Naive thymus-derived CD4-positive, alpha-beta T cell (primary cell): ENCODE measurements at regions of chr14 and their contacts with region 1.

Region 1: DNA sequence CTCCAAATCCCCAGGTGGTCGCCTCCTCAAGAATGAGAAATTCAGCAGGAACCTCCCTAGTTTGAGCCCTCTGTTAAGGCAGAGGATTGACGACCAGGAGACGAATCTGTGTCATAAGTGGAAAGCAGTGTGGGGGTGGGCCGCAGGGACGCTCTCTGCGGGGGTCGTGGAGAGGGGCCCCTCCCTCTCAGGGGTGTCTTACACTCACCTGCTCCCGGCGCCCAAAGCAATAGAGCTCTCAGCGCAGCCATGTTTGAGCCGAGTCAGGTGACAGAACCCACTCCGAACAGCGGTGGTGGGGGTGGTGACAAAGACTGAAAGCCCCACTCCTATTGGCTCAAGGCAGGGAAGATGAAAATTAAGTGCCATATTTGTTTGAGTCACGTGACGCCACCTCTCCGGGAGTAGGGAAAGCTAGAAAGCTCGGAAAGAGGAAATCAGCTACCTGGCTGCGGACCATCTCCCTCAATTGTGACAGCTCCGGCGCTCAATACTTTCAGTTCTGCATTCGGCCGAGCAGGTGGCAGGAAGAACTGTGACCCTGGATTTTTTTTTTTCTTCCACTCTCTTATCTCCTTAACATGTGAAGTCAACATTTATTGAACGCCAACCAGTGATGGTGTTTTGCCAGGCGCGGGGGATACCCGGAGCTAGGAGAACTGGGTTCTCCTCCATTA is at the start of gene ZFYVE26:
- DNase-seq: peak; percentile 55 to 93 (median 87)
- ATAC-seq: peak; percentile 96
- H3K4me3 ChIP-seq: peak within 1 kb of the TSS; percentile 91
- H3K4me3 Mint-ChIP-seq: peak within 1 kb of the TSS; percentile 87 to 99 (median 98)
- H3K27ac ChIP-seq: peak within 1 kb of the TSS; percentile 76
- H3K27ac Mint-ChIP-seq: peak within 1 kb of the TSS; percentile 91 to 99 (median 98)
- H3K4me1 ChIP-seq: peaks cover 11 to 15% of the 10 kb centered on the region in 2 donors
- H3K4me1 Mint-ChIP-seq: peaks cover 24 to 73% (median 65%) of the 10 kb centered on the region in 7 donors
- H3K27me3 ChIP-seq: no peaks in the 10 kb centered on the region
- H3K27me3 Mint-ChIP-seq: no peaks in the 10 kb centered on the region
- total RNA-seq, gene ZFYVE26: 25.0 to 38.9 (median 31.1) TPM

Region 2: GRCh38 chr14:67240978-67241414 is 575.5 kb before region 1 on chr14:
- CTCF ChIA-PET with region 1: no interaction called
- POLR2A ChIA-PET with region 1: no interaction called
- intact Hi-C with region 1: loop called in 1 of 2 experiments (anchors 5 kb)
- DNase-seq: peak; percentile 87 to 93 (median 91)
- ATAC-seq: peak; percentile 97
- H3K4me3 ChIP-seq: peak overlapping the region; percentile 84
- H3K4me3 Mint-ChIP-seq: peak overlapping the region; percentile 81 to 95 (median 91)
- H3K27ac ChIP-seq: peak overlapping the region; percentile 74
- H3K27ac Mint-ChIP-seq: peak overlapping the region; percentile 8 to 92 (median 85)
- H3K4me1 ChIP-seq: peaks cover 6 to 10% of the 10 kb centered on the region in 2 donors
- H3K4me1 Mint-ChIP-seq: peaks cover 16 to 37% (median 28%) of the 10 kb centered on the region in 7 donors
- H3K27me3 ChIP-seq: no peaks in the 10 kb centered on the region
- H3K27me3 Mint-ChIP-seq: peaks cover 0 to 33% (median 0%) of the 10 kb centered on the region in 5 donors

Region 3: DNA sequence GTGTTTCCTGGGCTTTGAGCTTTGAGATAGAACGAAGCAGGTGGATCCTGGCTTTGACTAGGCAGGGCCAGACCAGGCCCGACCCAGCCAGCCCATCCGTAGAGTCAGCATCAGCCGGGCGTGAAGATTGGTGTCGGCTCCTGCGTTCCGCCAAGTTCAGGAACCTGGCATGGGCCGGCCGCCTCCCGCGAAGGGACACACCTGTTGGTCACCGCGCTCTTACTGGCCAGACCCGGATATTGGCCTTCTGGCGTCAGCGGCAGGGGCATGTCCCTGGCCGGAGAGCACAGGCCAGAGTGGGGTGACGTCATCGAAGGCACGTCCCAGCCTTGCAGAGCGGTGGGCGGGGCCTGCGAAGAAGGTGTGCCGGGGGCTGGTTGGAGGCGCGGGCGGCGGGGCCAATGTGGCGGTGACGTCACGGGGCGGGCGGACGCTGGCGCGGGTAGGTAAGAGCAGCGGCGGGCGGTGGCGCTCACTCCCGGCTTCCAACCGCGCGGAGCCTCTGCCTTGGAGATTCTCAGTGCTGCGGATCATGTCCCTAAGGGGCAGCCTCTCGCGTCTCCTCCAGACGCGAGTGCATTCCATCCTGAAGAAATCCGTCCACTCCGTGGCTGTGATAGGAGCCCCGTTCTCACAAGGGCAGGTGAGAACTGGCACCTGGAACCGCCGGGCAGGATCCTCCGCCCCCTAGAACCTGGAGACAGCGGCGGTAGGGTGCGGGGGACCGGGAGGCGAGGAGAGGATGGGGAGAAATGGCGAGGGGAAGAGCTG is 196.8 kb before region 1 on chr14 and contains the start of gene ARG2:
- CTCF ChIA-PET with region 1: no interaction called
- POLR2A ChIA-PET with region 1: interaction called, 3 read pairs
- intact Hi-C with region 1: loop called (anchors 1 kb)
- DNase-seq: peak; percentile 92 to 98 (median 95)
- ATAC-seq: peak; percentile 95
- H3K4me3 ChIP-seq: peak within 1 kb of the TSS; percentile 93
- H3K4me3 Mint-ChIP-seq: peak within 1 kb of the TSS; percentile 89 to 93 (median 90)
- H3K27ac ChIP-seq: peak within 1 kb of the TSS; percentile 82
- H3K27ac Mint-ChIP-seq: peak within 1 kb of the TSS; percentile 70 to 97 (median 94)
- H3K4me1 ChIP-seq: peaks cover 12 to 18% of the 10 kb centered on the region in 2 donors
- H3K4me1 Mint-ChIP-seq: peaks cover 21 to 42% (median 37%) of the 10 kb centered on the region in 7 donors
- H3K27me3 ChIP-seq: no peaks in the 10 kb centered on the region
- H3K27me3 Mint-ChIP-seq: peaks cover 0 to 23% (median 0%) of the 10 kb centered on the region in 5 donors
- total RNA-seq, gene ARG2: 0.46 to 5.1 (median 3.2) TPM

Region 4: DNA sequence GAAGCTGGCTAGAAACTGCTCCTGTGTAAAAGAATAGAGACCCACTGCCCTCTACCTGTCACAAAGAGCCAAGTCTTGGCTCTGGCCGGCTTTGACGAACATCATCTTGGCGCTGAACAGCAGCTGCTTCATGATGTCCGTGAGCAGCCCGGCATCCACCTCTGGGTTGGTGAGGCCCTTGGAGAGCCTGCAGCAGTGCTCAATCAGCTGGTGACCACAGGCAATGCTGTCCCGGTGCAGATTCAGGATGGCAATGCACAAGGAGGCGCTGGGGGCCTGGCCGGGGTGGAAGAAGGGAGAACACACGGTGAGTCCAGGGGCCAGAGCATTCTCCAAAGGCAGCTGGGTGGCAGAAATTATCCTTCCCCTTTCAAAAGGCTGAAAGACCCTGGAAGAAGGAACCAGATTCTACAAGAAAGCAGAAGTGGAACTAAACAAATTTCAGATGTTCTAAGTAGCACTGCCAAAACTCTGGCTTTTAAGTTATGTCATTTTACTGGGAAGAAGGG is 50.2 kb before region 1 on chr14:
- CTCF ChIA-PET with region 1: no interaction called
- POLR2A ChIA-PET with region 1: no interaction called
- intact Hi-C with region 1: no loop called
- DNase-seq: no peak
- ATAC-seq: peak; percentile 62
- H3K4me3 ChIP-seq: no peak overlapping the region
- H3K4me3 Mint-ChIP-seq: no peak overlapping the region
- H3K27ac ChIP-seq: no peak overlapping the region
- H3K27ac Mint-ChIP-seq: no peak overlapping the region
- H3K4me1 ChIP-seq: no peaks in the 10 kb centered on the region
- H3K4me1 Mint-ChIP-seq: no peaks in the 10 kb centered on the region
- H3K27me3 ChIP-seq: no peaks in the 10 kb centered on the region
- H3K27me3 Mint-ChIP-seq: no peaks in the 10 kb centered on the region

Region 5: DNA sequence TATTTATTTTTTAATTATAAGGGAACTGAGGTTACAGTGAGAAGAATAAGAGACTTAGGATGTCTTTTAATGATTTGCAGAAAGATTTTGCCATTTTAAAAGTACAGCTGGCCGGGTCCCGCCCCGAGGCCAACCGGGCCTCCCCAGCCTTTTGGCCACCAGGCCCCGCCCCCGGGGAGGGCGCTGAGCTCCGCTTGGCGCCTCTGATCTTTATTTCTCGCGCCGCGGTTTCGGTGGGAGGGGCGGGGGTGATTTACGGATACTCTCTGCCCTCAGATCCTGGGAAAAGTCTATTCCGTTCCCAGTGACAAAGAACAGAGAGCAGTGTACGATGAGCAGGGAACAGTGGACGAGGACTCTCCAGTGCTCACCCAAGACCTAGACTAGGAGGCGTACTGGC is 17.7 kb before region 1 on chr14:
- CTCF ChIA-PET with region 1: no interaction called
- POLR2A ChIA-PET with region 1: no interaction called
- intact Hi-C with region 1: no loop called
- DNase-seq: no peak
- ATAC-seq: no peak
- H3K4me3 ChIP-seq: no peak overlapping the region
- H3K4me3 Mint-ChIP-seq: no peak overlapping the region
- H3K27ac ChIP-seq: no peak overlapping the region
- H3K27ac Mint-ChIP-seq: no peak overlapping the region
- H3K4me1 ChIP-seq: no peaks in the 10 kb centered on the region
- H3K4me1 Mint-ChIP-seq: peaks cover 0 to 4% (median 0%) of the 10 kb centered on the region in 7 donors
- H3K27me3 ChIP-seq: no peaks in the 10 kb centered on the region
- H3K27me3 Mint-ChIP-seq: no peaks in the 10 kb centered on the region

Region 6: DNA sequence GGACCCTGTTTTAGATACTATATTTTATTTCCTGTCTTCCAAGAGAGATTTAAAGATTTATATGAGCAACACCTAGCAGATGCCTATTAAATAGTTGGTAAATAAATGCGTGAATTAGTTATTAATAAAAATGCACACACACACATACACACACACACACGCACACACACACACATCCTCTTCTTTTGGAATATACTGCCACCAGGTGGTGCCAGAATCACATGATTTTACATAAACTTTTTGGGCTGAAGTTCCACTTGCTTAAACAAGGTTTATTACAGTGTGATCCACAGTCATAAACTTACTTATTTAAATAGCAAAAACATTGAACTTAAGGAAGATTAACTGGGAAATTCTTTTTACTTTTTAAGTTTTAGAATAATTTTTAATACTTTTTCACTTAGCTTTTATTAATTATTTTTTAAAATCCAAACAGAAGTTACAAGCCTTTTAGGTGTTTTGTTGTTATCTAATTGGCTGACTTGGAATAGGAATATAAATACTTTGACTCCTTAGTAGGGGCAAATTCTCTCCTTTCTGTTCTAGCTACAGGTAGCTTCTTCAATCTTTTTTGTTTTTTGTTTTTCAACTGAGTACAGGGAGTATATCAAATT is 20.7 kb after region 1 on chr14:
- CTCF ChIA-PET with region 1: interaction called, 3 read pairs
- POLR2A ChIA-PET with region 1: interaction called, 6 read pairs
- intact Hi-C with region 1: loop called in 1 of 2 experiments (anchors 1 kb)
- DNase-seq: peak in 7 of 9 donors; percentile 50 to 73 (median 62)
- ATAC-seq: peak; percentile 92
- H3K4me3 ChIP-seq: no peak overlapping the region
- H3K4me3 Mint-ChIP-seq: no peak overlapping the region
- H3K27ac ChIP-seq: no peak overlapping the region
- H3K27ac Mint-ChIP-seq: peak overlapping the region in 2 of 9 donors; percentile 16 to 67
- H3K4me1 ChIP-seq: no peaks in the 10 kb centered on the region
- H3K4me1 Mint-ChIP-seq: peaks cover 0 to 4% (median 0%) of the 10 kb centered on the region in 7 donors
- H3K27me3 ChIP-seq: no peaks in the 10 kb centered on the region
- H3K27me3 Mint-ChIP-seq: no peaks in the 10 kb centered on the region

Region 7: GRCh38 chr14:68663385-68664076 is 847.1 kb after region 1 on chr14:
- CTCF ChIA-PET with region 1: no interaction called
- POLR2A ChIA-PET with region 1: no interaction called
- intact Hi-C with region 1: no loop called
- DNase-seq: peak in 1 of 9 donors; percentile 63
- ATAC-seq: peak; percentile 34
- H3K4me3 ChIP-seq: peak overlapping the region; percentile 25
- H3K4me3 Mint-ChIP-seq: peak overlapping the region in 9 of 10 donors; percentile 21 to 82 (median 30)
- H3K27ac ChIP-seq: no peak overlapping the region
- H3K27ac Mint-ChIP-seq: peak overlapping the region in 5 of 9 donors; percentile 8 to 79 (median 62)
- H3K4me1 ChIP-seq: peaks cover 0 to 24% of the 10 kb centered on the region in 2 donors
- H3K4me1 Mint-ChIP-seq: peaks cover 18 to 53% (median 27%) of the 10 kb centered on the region in 7 donors
- H3K27me3 ChIP-seq: no peaks in the 10 kb centered on the region
- H3K27me3 Mint-ChIP-seq: peaks cover 0 to 4% (median 0%) of the 10 kb centered on the region in 5 donors

Region 8: GRCh38 chr14:68970038-68970612 is 1153.7 kb after region 1 on chr14:
- CTCF ChIA-PET with region 1: no interaction called
- POLR2A ChIA-PET with region 1: no interaction called
- intact Hi-C with region 1: loop called in 1 of 2 experiments (anchors 5 kb)
- DNase-seq: peak in 7 of 9 donors; percentile 81 to 94 (median 91)
- ATAC-seq: peak; percentile 77
- H3K4me3 ChIP-seq: peak overlapping the region; percentile 46
- H3K4me3 Mint-ChIP-seq: peak overlapping the region; percentile 43 to 96 (median 90)
- H3K27ac ChIP-seq: peak overlapping the region; percentile 89
- H3K27ac Mint-ChIP-seq: peak overlapping the region; percentile 85 to 100 (median 99)
- H3K4me1 ChIP-seq: peaks cover 27 to 79% of the 10 kb centered on the region in 2 donors
- H3K4me1 Mint-ChIP-seq: peaks cover 57 to 100% (median 90%) of the 10 kb centered on the region in 7 donors
- H3K27me3 ChIP-seq: no peaks in the 10 kb centered on the region
- H3K27me3 Mint-ChIP-seq: no peaks in the 10 kb centered on the region

Region 9: GRCh38 chr14:69398053-69398817 is 1581.8 kb after region 1 on chr14 and contains the starts of genes ERH and SLC39A9:
- CTCF ChIA-PET with region 1: no interaction called
- POLR2A ChIA-PET with region 1: no interaction called
- intact Hi-C with region 1: loop called (anchors 1 to 5 kb)
- DNase-seq: peak; percentile 78 to 97 (median 94)
- ATAC-seq: peak; percentile 93
- H3K4me3 ChIP-seq: peak within 1 kb of the TSS; percentile 81
- H3K4me3 Mint-ChIP-seq: peak within 1 kb of the TSS; percentile 89 to 100 (median 97)
- H3K27ac ChIP-seq: peak within 1 kb of the TSS; percentile 86
- H3K27ac Mint-ChIP-seq: peak within 1 kb of the TSS; percentile 98 to 100 (median 100)
- H3K4me1 ChIP-seq: peaks cover 31 to 52% of the 10 kb centered on the region in 2 donors
- H3K4me1 Mint-ChIP-seq: peaks cover 39 to 93% (median 73%) of the 10 kb centered on the region in 7 donors
- H3K27me3 ChIP-seq: no peaks in the 10 kb centered on the region
- H3K27me3 Mint-ChIP-seq: no peaks in the 10 kb centered on the region
- total RNA-seq, gene ERH: 85.1 to 330 (median 96.3) TPM
- total RNA-seq, gene SLC39A9: 27.2 to 50.3 (median 35.3) TPM